ENCODE measurements at regions of chr21 and their contacts with region 1.

Region 1: GRCh38 chr21:41816220-41817165 is 49.6 kb upstream of the RIPK4 start:
- DNase-seq: peak; percentile 76
- ATAC-seq: peak; percentile 95
- H3K4me3 ChIP-seq: no peak overlapping the region
- H3K4me3 Mint-ChIP-seq: no peak overlapping the region
- H3K27ac ChIP-seq: no peak overlapping the region
- H3K27ac Mint-ChIP-seq: no peak overlapping the region
- H3K4me1 ChIP-seq: peaks cover 0 to 5% of the 10 kb centered on the region in 2 donors
- H3K4me1 Mint-ChIP-seq: peaks cover 8% of the 10 kb centered on the region
- H3K27me3 ChIP-seq: no peaks in the 10 kb centered on the region
- H3K27me3 Mint-ChIP-seq: no peaks in the 10 kb centered on the region
- CTCF ChIP-seq: peak; percentile 85

Region 2: GRCh38 chr21:41733949-41734645 is 82.4 kb before region 1 on chr21:
- CTCF ChIA-PET with region 1: no interaction called
- POLR2A ChIA-PET with region 1: no interaction called
- intact Hi-C with region 1: no loop called
- DNase-seq: no peak
- ATAC-seq: no peak
- H3K4me3 ChIP-seq: no peak overlapping the region
- H3K4me3 Mint-ChIP-seq: no peak overlapping the region
- H3K27ac ChIP-seq: no peak overlapping the region
- H3K27ac Mint-ChIP-seq: no peak overlapping the region
- H3K4me1 ChIP-seq: no peaks in the 10 kb centered on the region
- H3K4me1 Mint-ChIP-seq: peaks cover 6% of the 10 kb centered on the region
- H3K27me3 ChIP-seq: peaks cover 0 to 7% (median 2%) of the 10 kb centered on the region in 4 experiments
- H3K27me3 Mint-ChIP-seq: peaks cover 56% of the 10 kb centered on the region
- CTCF ChIP-seq: no peak

Region 3: DNA sequence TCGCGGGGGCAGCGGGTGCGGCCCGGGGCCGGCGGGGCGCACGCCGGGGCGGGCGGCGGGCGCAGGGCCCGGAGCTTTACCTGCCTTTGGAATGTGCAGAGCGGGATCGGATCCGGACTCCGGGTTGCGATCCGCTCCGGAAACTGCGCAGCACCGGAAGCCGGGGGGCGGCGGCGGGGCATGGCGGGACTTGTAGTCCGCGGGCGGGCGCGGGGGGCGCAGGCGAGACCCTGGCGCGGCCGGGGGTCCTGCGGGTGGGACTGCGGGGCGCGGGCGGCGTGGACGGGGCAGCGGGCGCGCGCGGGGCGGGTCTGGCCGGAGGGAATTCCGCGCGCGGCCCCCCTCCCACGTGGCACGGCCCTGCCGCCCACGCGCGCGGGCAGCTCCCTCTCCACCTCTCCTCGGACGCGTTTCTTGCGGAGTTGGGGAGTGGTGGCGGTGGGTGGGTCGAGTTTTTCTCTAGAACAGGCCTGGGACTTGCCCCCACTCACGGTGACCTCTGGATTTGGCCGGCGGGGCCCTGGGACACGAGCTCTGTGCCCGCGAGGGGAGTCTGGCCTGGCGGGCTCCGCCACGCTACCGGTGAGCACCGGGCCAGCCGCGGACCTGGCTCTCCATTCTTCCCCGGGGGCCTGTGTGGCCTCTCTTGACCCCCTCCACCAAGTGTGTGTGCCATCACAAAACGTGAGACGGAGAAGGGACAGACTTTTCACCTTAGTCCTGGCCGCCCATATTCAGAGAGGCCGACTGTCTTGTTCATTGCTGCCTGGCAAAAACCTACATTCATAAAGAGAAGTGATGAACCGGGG is 62.9 kb after region 1 on chr21 and contains the start of gene PRDM15:
- CTCF ChIA-PET with region 1: interaction called, 16 read pairs
- POLR2A ChIA-PET with region 1: no interaction called
- intact Hi-C with region 1: loop called (anchors 2 kb)
- DNase-seq: peak; percentile 83
- ATAC-seq: peak; percentile 67
- H3K4me3 ChIP-seq: peak within 1 kb of the TSS; percentile 53 to 86 (median 81)
- H3K4me3 Mint-ChIP-seq: peak within 1 kb of the TSS; percentile 94
- H3K27ac ChIP-seq: peak within 1 kb of the TSS; percentile 76 to 80
- H3K27ac Mint-ChIP-seq: peak within 1 kb of the TSS; percentile 97
- H3K4me1 ChIP-seq: peaks cover 13 to 21% of the 10 kb centered on the region in 2 donors
- H3K4me1 Mint-ChIP-seq: peaks cover 35% of the 10 kb centered on the region
- H3K27me3 ChIP-seq: no peaks in the 10 kb centered on the region
- H3K27me3 Mint-ChIP-seq: no peaks in the 10 kb centered on the region
- CTCF ChIP-seq: no peak
- total RNA-seq, gene PRDM15: 20.7 and 21.3 TPM in 2 replicates

Region 4: DNA sequence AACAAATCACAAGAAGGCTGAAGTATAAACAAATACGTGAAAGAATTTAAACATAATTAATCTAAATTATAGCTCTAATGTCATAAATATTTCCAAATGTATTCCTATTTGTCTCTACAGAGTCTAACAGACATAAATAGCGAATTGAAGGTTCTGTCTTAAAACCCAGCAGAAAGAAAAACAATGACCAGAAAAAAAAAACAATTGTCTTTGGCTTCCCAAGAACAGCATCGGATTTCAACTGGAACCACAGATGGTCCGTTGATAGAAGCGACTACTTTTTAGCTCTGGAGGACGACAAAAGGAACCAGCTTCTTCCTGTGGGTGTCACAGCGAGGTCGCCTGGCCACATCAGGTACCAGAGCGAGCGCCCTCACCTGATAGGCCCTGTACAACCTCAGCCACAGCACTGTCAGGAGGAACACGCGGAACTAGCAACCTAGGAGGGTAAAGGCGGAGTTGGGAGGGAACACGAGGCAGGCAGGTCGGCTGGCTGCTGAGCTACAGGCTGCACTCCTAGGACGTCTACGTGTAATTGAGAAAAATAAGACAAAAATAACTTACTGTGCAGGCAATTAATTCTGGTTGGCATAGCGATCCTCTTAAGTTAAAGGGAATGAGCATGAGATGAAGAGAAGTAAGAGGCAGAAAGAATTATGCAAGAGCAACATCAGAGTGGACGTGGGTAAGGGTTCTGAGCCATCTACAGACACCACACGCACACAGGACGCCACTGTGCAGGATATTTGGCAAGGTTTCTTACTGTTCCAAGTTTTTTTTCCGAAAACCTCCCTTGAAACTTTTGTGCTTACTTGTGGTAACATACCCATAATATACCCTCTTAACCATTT is 79.4 kb after region 1 on chr21:
- CTCF ChIA-PET with region 1: interaction called, 12 read pairs
- POLR2A ChIA-PET with region 1: no interaction called
- intact Hi-C with region 1: no loop called
- DNase-seq: peak; percentile 71
- ATAC-seq: peak; percentile 93
- H3K4me3 ChIP-seq: no peak overlapping the region
- H3K4me3 Mint-ChIP-seq: no peak overlapping the region
- H3K27ac ChIP-seq: peak overlapping the region in 1 of 2 donors; percentile 8
- H3K27ac Mint-ChIP-seq: peak overlapping the region; percentile 29
- H3K4me1 ChIP-seq: peaks cover 7 to 10% of the 10 kb centered on the region in 2 donors
- H3K4me1 Mint-ChIP-seq: peaks cover 13% of the 10 kb centered on the region
- H3K27me3 ChIP-seq: no peaks in the 10 kb centered on the region
- H3K27me3 Mint-ChIP-seq: no peaks in the 10 kb centered on the region
- CTCF ChIP-seq: no peak

Region 5: DNA sequence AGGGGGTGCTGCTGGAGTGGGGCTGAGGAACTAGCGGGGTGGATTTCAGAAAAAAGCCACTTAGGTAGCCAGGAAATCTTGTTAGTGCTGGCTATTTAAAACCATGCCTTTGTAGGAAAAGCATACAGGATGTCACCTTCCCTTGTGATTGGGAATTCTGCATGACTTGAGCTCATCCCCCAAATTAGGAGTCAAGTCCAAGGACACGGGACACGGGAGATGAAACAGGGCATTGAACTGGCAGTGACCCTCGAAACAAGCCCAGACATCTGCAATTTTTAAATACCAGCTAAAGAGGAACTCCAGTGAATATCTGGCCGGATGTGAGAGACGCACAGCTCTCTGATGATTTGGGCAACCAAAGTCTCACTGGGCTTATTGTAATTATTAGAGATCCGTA is 104.5 kb after region 1 on chr21:
- CTCF ChIA-PET with region 1: interaction called, 10 read pairs
- POLR2A ChIA-PET with region 1: no interaction called
- intact Hi-C with region 1: no loop called
- DNase-seq: peak; percentile 54
- ATAC-seq: peak; percentile 68
- H3K4me3 ChIP-seq: no peak overlapping the region
- H3K4me3 Mint-ChIP-seq: peak overlapping the region; percentile 26
- H3K27ac ChIP-seq: peak overlapping the region in 1 of 2 donors; percentile 8
- H3K27ac Mint-ChIP-seq: peak overlapping the region; percentile 50
- H3K4me1 ChIP-seq: peaks cover 46 to 48% of the 10 kb centered on the region in 2 donors
- H3K4me1 Mint-ChIP-seq: peaks cover 44% of the 10 kb centered on the region
- H3K27me3 ChIP-seq: no peaks in the 10 kb centered on the region
- H3K27me3 Mint-ChIP-seq: no peaks in the 10 kb centered on the region
- CTCF ChIP-seq: no peak

Region 6: GRCh38 chr21:41933313-41934086 is 117.0 kb after region 1 on chr21:
- CTCF ChIA-PET with region 1: interaction called, 8 read pairs
- POLR2A ChIA-PET with region 1: no interaction called
- intact Hi-C with region 1: loop called (anchors 5 kb)
- DNase-seq: no peak
- ATAC-seq: no peak
- H3K4me3 ChIP-seq: peak overlapping the region in 3 of 5 experiments; percentile 1 to 36 (median 23)
- H3K4me3 Mint-ChIP-seq: peak overlapping the region; percentile 77
- H3K27ac ChIP-seq: no peak overlapping the region
- H3K27ac Mint-ChIP-seq: peak overlapping the region; percentile 83
- H3K4me1 ChIP-seq: peaks cover 24 to 41% of the 10 kb centered on the region in 2 donors
- H3K4me1 Mint-ChIP-seq: peaks cover 43% of the 10 kb centered on the region
- H3K27me3 ChIP-seq: peaks cover 0 to 3% (median under 1%) of the 10 kb centered on the region in 4 experiments
- H3K27me3 Mint-ChIP-seq: peaks cover 21% of the 10 kb centered on the region
- CTCF ChIP-seq: no peak

Region 7: DNA sequence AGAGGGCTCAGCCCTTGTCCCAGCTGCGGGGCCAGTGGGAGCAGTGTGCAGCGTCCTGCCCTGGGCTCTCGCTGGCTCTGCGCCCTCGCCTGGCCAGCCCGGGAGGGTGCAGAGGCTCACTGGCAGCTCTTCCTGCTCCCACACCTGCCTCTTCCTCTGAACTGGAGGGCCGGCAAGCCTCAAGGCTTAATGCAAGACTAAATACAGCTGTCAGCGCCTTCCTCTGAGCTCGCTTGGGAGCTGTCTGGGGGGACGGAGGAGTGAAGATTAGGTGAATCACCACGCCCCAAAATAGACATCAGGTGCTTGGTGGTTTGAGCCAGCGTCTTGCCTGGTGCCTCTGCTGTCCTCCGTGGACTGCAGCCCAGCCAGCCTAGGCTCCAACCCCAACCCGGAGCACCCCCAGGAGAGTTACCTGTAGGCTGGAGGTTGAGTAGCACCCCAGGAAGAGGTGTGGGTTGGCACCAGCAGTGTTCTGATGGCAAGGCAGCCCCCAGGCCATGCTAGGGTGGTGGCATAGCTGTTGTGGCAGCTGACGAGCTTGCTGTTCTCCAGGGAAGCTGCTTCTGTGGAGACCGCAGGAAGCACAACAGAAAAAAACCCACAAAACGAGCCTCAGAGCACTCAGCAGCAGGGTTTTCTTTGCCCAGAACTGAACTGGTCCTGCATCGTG is 291.5 kb after region 1 on chr21:
- CTCF ChIA-PET with region 1: interaction called, 35 read pairs
- POLR2A ChIA-PET with region 1: no interaction called
- intact Hi-C with region 1: no loop called
- DNase-seq: peak; percentile 85
- ATAC-seq: peak; percentile 86
- H3K4me3 ChIP-seq: peak overlapping the region in 4 of 5 experiments; percentile 5 to 50 (median 28)
- H3K4me3 Mint-ChIP-seq: peak overlapping the region; percentile 81
- H3K27ac ChIP-seq: peak overlapping the region; percentile 41 to 50
- H3K27ac Mint-ChIP-seq: peak overlapping the region; percentile 87
- H3K4me1 ChIP-seq: peaks cover 17 to 22% of the 10 kb centered on the region in 2 donors
- H3K4me1 Mint-ChIP-seq: peaks cover 38% of the 10 kb centered on the region
- H3K27me3 ChIP-seq: peaks cover 0 to 7% (median 0%) of the 10 kb centered on the region in 4 experiments
- H3K27me3 Mint-ChIP-seq: peaks cover 6% of the 10 kb centered on the region
- CTCF ChIP-seq: peak; percentile 70